Motor neuron (in vitro differentiated cells): ENCODE measurements at regions of chr4 and their contacts with region 1.

Region 1: DNA sequence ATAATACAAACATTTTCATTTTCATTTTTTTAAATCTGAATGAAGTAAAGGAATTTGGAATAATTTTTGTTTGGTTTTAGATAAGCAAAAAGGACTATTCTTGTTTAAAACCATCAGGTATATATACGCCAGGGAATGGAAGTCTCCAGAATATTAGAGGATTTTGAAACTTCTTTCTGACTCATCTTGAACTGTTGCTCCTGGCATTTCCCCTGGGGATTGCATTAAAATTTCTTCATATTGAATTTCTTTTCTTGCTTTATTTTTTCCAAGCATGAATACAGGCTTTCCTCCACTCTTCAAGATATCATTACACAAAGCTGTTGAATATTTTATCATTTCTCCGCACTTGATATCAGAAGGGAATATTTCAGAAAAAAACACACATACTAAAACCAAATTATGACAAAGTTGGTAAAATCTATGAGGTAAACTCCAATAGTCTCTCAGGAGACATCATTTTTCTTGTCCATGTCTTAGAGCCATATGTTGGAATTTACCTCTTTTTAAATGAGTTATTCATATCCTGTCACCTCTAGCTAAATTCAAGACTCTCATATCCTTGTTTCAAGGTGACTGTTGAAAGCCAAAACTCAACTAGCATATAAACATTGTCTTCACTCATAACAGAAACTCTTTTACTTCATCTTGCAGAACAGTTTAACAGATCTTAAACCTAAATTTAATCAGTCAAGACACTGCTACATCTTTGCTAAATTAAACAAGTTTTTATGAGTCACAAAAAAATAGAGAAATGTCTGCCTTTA is 20.7 kb upstream of the CSN1S1 start:
- ATAC-seq: peak in 1 of 8 experiments; percentile 48
- H3K4me3 ChIP-seq: no peak overlapping the region
- H3K27ac ChIP-seq: no peak overlapping the region
- H3K4me1 ChIP-seq: no peaks in the 10 kb centered on the region

Region 2: GRCh38 chr4:70183168-70183939 is 273.2 kb after region 1 on chr4:
- in situ Hi-C with region 1: loop called in 2 of 9 experiments (anchors 10 to 25 kb)
- ATAC-seq: peak in 3 of 8 experiments; percentile 59 to 80 (median 75)
- H3K4me3 ChIP-seq: no peak overlapping the region
- H3K27ac ChIP-seq: no peak overlapping the region
- H3K4me1 ChIP-seq: no peaks in the 10 kb centered on the region

Region 3: DNA sequence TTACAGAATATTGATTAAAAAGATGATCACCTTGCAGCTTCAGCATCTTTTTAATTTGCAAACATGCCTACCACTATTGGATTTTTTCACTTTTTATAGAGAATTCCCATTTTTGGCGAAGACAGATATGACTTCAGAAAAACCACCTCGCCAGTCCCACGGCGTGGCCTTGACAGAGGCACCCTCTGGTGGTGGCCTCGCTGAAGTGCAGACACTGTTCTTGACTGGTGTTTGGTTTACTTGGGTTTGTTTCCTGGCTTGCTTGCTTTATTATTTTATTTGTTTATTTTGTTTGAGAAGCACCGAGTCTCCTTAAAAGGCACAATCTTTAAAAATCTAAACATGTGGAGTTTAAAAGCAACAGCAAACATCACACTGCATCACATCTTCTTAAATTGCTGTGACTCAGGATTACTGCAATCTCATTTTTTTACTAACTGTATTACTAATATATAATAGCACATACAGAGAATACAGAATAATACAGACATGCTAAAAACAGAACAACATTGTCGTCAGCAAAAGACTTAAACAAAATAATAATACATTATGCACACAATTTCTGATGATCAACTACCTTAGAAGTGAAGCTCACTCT is 595.1 kb after region 1 on chr4:
- in situ Hi-C with region 1: loop called in 1 of 9 experiments (anchors 25 kb)
- ATAC-seq: peak in 4 of 8 experiments; percentile 58 to 81 (median 76)
- H3K4me3 ChIP-seq: no peak overlapping the region
- H3K27ac ChIP-seq: no peak overlapping the region
- H3K4me1 ChIP-seq: no peaks in the 10 kb centered on the region

Region 4: DNA sequence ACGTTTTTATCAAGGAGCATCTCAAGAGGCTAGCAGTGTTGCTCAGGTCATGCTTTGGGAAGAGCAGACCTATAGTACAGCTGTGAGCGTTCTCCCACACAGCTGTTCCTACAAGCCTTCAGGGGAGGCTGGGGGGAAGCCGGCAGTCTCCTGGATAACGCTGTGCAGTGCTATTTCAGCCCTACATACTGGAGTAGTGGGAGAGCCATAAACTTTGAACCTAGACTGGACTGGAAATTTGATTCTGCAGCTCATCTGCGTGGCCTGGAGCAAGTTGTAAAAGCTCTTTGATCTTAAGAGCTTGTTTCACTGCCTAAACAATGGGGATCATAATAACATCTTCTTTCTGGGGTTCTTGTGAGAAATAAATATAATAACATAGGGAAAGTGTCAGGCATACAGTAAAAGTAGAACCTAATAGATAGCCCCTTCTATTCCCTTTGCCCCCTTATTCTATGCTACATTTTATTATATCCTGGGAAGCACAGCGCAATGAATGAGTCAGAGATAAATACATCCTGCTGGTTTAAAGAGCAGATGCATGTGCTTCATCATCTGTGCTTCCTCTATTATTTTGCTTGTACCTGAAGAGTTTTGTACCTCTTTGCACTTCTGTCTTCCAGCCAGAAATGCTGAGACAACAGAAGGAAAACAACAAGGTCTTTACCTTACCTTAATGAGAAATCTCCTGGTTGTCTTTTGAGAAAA is 667.2 kb after region 1 on chr4:
- in situ Hi-C with region 1: no loop called
- ATAC-seq: peak in 1 of 8 experiments; percentile 17
- H3K4me3 ChIP-seq: no peak overlapping the region
- H3K27ac ChIP-seq: no peak overlapping the region
- H3K4me1 ChIP-seq: no peaks in the 10 kb centered on the region